Posterior vena cava (tissue), 2 donors: ENCODE measurements at regions of chr2 and their contacts with region 1.

Region 1: DNA sequence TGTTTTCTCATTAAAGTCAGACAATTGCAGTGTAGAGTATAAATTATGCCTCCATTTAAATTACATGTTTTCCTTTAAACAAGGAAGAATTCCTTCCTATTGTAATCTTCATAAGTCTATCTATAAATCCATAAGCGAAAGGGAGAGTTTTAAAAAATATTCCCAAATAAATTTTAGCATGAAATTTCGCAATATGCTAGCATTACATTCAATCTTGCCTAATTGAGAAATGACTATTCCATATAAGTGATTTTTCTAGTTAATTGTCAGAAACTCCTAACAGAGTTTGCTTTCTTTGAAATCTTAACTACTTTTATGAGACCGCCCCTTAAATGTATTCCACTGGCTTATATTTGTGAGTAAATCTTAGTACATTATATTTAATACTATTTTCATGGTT is 133.1 kb upstream of the CRIM1 start:
- DNase-seq: no peak

Region 2: DNA sequence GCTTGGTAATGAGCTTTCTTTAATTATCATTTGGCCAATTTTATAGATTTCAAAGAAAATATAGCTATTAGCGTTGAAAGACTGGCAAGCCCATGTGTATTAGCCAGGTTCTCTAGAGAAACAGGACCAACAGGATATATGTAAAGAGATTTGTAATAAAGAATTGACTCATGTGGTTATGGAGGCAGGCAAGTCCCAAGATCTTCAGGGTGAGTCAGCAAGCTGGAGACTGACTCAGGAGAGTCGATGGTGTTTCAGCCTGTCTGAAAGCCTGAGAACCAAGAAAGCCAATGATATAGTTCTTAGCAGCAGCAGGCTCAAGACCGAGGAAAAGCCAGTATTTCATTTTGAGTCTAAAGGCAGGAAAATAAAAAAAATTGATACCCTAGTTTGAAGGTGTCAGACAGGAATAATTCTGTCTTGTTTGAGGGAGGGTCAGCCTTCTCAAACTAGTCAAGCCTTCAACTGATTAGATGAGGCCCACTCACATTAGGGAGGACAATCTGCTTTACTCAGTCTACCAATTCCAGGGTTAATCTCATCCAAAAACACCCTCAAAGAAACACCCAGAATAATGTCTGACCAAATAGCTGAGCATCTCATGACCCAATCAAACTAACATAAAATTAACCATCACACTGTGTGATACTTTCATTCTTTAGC is 54.8 kb after region 1 on chr2:
- intact Hi-C with region 1: no loop called
- DNase-seq: no peak

Region 3: DNA sequence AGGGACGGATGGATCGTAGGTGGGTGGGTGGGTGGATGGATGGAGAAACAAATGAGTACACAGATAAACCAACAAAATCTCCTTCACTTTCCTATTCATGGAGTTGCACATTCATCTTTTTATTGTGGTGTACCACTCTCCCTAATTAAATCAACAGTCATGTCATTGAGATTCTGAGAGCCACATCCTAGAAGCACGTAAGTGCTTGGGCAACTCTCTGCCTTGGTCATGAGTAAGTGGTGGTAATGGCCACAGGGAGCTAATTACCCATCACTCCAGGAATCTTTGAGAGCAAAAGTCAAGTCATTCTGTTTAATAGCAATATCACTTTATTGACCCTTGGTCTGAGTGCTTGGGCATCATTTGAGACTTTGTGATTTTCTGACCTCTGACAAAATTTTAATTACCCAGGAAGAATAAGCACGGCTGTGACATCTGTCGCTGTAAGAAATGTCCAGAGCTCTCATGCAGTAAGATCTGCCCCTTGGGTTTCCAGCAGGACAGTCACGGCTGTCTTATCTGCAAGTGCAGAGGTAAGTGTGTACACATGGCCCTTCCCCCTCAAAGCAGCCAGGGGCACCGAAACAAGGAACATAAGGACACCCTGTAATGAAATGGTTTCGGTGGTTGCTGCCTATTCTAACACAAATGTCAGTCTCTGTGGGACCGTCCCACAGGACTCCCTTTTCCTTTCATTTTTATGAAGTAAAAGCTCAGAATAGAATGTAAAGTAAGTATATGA is 289.5 kb after region 1 on chr2:
- intact Hi-C with region 1: loop called in 1 of 2 experiments (anchors 5 kb)
- DNase-seq: no peak